Tibial artery (tissue), 4 donors: ENCODE measurements at regions of chr22 and their contacts with region 1.

Region 1: GRCh38 chr22:23521441-23522113 is 58.5 kb downstream of the IGLL1 start:
- DNase-seq: peak; percentile 90 to 94
- H3K4me3 ChIP-seq: peak overlapping the region; percentile 51 to 55
- H3K27ac ChIP-seq: peak overlapping the region; percentile 99 to 100
- H3K4me1 ChIP-seq: peaks cover 0 to 35% (median 26%) of the 10 kb centered on the region in 4 donors
- H3K27me3 ChIP-seq: no peaks in the 10 kb centered on the region
- CTCF ChIP-seq: peak in 1 of 2 experiments; percentile 29

Region 2: GRCh38 chr22:22422629-22423112 is 1098.9 kb before region 1 on chr22:
- intact Hi-C with region 1: no loop called
- DNase-seq: peak in 1 of 2 donors; percentile 54
- H3K4me3 ChIP-seq: no peak overlapping the region
- H3K27ac ChIP-seq: no peak overlapping the region
- H3K4me1 ChIP-seq: no peaks in the 10 kb centered on the region
- H3K27me3 ChIP-seq: peaks cover 0 to 11% of the 10 kb centered on the region in 2 donors
- CTCF ChIP-seq: peak; percentile 24 to 37

Region 3: DNA sequence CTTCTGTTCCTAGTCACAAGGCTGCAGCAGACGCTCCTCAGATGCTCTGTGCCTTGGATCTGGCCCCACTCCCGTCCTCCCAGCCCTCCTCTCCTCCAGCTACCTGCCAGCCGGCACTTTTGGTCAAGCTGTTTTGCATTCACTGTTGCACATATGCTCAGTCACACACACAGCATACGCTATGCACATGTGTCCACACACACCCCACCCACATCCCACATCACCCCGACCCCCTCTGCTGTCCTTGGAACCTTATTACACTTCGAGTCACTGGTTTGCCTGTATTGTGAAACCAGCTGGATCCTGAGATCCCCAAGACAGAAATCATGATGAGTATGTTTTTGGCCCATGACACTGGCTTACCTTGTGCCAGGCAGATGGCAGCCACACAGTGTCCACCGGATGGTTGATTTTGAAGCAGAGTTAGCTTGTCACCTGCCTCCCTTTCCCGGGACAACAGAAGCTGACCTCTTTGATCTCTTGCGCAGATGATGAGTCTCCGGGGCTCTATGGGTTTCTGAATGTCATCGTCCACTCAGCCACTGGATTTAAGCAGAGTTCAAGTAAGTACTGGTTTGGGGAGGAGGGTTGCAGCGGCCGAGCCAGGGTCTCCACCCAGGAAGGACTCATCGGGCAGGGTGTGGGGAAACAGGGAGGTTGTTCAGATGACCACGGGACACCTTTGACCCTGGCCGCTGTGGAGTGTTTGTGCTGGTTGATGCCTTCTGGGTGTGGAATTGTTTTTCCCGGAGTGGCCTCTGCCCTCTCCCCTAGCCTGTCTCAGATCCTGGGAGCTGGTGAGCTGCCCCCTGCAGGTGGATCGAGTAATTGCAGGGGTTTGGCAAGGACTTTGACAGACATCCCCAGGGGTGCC is 231.5 kb before region 1 on chr22:
- intact Hi-C with region 1: no loop called
- DNase-seq: peak; percentile 70 to 76
- H3K4me3 ChIP-seq: no peak overlapping the region
- H3K27ac ChIP-seq: peak overlapping the region; percentile 52 to 57
- H3K4me1 ChIP-seq: peaks cover 0 to 18% (median 12%) of the 10 kb centered on the region in 4 donors
- H3K27me3 ChIP-seq: no peaks in the 10 kb centered on the region
- CTCF ChIP-seq: peak; percentile 67 to 72

Region 4: GRCh38 chr22:23305922-23306374 is 215.6 kb before region 1 on chr22:
- intact Hi-C with region 1: loop called (anchors 10 kb)
- DNase-seq: peak; percentile 91 to 95
- H3K4me3 ChIP-seq: peak overlapping the region; percentile 33 to 34
- H3K27ac ChIP-seq: peak overlapping the region; percentile 93 to 97
- H3K4me1 ChIP-seq: peaks cover 16 to 60% (median 21%) of the 10 kb centered on the region in 4 donors
- H3K27me3 ChIP-seq: no peaks in the 10 kb centered on the region
- CTCF ChIP-seq: no peak

Region 5: GRCh38 chr22:23458663-23459541 is 62.7 kb before region 1 on chr22:
- intact Hi-C with region 1: no loop called
- DNase-seq: no peak
- H3K4me3 ChIP-seq: no peak overlapping the region
- H3K27ac ChIP-seq: no peak overlapping the region
- H3K4me1 ChIP-seq: peaks cover 0 to 8% (median 0%) of the 10 kb centered on the region in 4 donors
- H3K27me3 ChIP-seq: peaks cover 0 to 43% of the 10 kb centered on the region in 2 donors
- CTCF ChIP-seq: no peak

Region 6: GRCh38 chr22:23649071-23649501 is 127.5 kb after region 1 on chr22:
- intact Hi-C with region 1: no loop called
- DNase-seq: peak in 1 of 2 donors; percentile 31
- H3K4me3 ChIP-seq: no peak overlapping the region
- H3K27ac ChIP-seq: no peak overlapping the region
- H3K4me1 ChIP-seq: no peaks in the 10 kb centered on the region
- H3K27me3 ChIP-seq: no peaks in the 10 kb centered on the region
- CTCF ChIP-seq: no peak

Region 7: GRCh38 chr22:23750714-23751440 is 229.3 kb after region 1 on chr22 and contains the start of gene ZNF70:
- intact Hi-C with region 1: loop called (anchors 10 kb)
- DNase-seq: peak; percentile 83 to 93
- H3K4me3 ChIP-seq: peak within 1 kb of the TSS; percentile 65 to 71
- H3K27ac ChIP-seq: peak within 1 kb of the TSS; percentile 83 to 93
- H3K4me1 ChIP-seq: peaks cover 0 to 29% (median 8%) of the 10 kb centered on the region in 4 donors
- H3K27me3 ChIP-seq: no peaks in the 10 kb centered on the region
- CTCF ChIP-seq: peak in 1 of 2 experiments; percentile 17